ENCODE measurements at regions of chr21 and their contacts with region 1.

Region 1: GRCh38 chr21:18369115-18369514 is 34.5 kb downstream of the TMPRSS15 start:
- DNase-seq: no peak
- H3K4me3 ChIP-seq: no peak overlapping the region
- H3K27ac ChIP-seq: no peak overlapping the region
- H3K27me3 ChIP-seq: no peaks in the 10 kb centered on the region
- CTCF ChIP-seq: peak in 55 of 56 donors; percentile 13 to 66 (median 41)

Region 2: DNA sequence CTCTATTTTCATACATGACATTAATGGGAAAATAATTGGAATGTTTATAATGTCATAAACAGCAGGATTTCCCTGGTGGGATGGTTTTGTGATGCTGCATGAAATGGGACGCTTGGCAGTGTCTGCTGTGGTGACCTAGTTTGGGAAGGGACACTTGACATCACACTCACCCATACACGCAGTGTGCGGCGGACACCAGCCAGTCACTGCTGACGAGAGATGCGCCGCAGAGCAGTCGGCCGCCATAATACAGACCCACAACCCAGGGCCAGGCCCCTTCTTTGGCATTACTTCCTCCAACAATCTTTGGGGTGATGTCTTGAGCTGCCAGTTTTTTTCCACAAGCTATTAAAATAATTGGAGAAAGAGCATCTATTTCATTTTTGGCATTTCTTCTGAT is 75.0 kb before region 1 on chr21:
- intact Hi-C with region 1: loop called in 1 of 2 experiments (anchors 2 kb)
- DNase-seq: no peak
- H3K4me3 ChIP-seq: no peak overlapping the region
- H3K27ac ChIP-seq: no peak overlapping the region
- H3K27me3 ChIP-seq: no peaks in the 10 kb centered on the region
- CTCF ChIP-seq: no peak